B cell (primary cell): ENCODE measurements at regions of chr13 and their contacts with region 1.

Region 1: DNA sequence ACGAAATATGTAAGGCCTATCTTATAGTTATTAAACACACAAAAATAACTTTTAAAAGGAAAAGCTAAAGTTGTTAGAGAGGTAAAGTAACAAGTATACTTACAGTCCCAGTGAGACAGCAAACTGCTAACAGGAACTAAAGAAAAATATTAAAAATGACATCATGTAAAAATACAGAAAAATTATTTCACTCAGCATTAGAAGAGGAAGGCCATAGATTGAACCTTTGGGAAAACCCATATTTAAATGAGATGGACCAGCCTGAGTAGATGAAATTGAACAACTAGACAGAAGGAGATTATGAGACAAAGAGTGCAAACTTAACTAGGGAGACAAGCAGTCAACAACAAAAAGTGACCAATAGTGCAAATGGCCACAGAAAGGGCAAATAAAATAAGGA is 49.4 kb downstream of the LNX2 start:
- DNase-seq: no peak
- ATAC-seq: no peak
- H3K4me3 ChIP-seq: no peak overlapping the region
- H3K4me3 Mint-ChIP-seq: no peak overlapping the region
- H3K27ac ChIP-seq: no peak overlapping the region
- H3K27ac Mint-ChIP-seq: no peak overlapping the region
- H3K4me1 ChIP-seq: no peaks in the 10 kb centered on the region
- H3K4me1 Mint-ChIP-seq: peaks cover 11% of the 10 kb centered on the region
- H3K27me3 ChIP-seq: no peaks in the 10 kb centered on the region
- H3K27me3 Mint-ChIP-seq: no peaks in the 10 kb centered on the region
- CTCF ChIP-seq: no peak

Region 2: GRCh38 chr13:27556109-27556508 is 14.8 kb before region 1 on chr13:
- CTCF ChIA-PET with region 1: interaction called, 3 read pairs
- POLR2A ChIA-PET with region 1: no interaction called
- intact Hi-C with region 1: loop called (anchors 2 kb)
- DNase-seq: peak; percentile 21
- ATAC-seq: no peak
- H3K4me3 ChIP-seq: no peak overlapping the region
- H3K4me3 Mint-ChIP-seq: no peak overlapping the region
- H3K27ac ChIP-seq: no peak overlapping the region
- H3K27ac Mint-ChIP-seq: no peak overlapping the region
- H3K4me1 ChIP-seq: no peaks in the 10 kb centered on the region
- H3K4me1 Mint-ChIP-seq: no peaks in the 10 kb centered on the region
- H3K27me3 ChIP-seq: no peaks in the 10 kb centered on the region
- H3K27me3 Mint-ChIP-seq: no peaks in the 10 kb centered on the region
- CTCF ChIP-seq: no peak